ENCODE measurements at regions of chr2 and their contacts with region 1.

Region 1: GRCh38 chr2:135004005-135004746 is 43.1 kb downstream of the MAP3K19 start:
- DNase-seq: peak; percentile 62 to 85 (median 82)
- ATAC-seq: peak; percentile 98
- H3K4me3 ChIP-seq: no peak overlapping the region
- H3K4me1 ChIP-seq: no peaks in the 10 kb centered on the region
- CTCF ChIP-seq: peak; percentile 73

Region 2: GRCh38 chr2:135709992-135710391 is 705.8 kb after region 1 on chr2:
- intact Hi-C with region 1: loop called (anchors 10 kb)
- DNase-seq: peak in 2 of 3 donors; percentile 65 to 67
- ATAC-seq: peak; percentile 73
- H3K4me3 ChIP-seq: no peak overlapping the region
- H3K4me1 ChIP-seq: no peaks in the 10 kb centered on the region
- CTCF ChIP-seq: peak; percentile 77